ENCODE measurements at regions of chr10 and their contacts with region 1.

Region 1: DNA sequence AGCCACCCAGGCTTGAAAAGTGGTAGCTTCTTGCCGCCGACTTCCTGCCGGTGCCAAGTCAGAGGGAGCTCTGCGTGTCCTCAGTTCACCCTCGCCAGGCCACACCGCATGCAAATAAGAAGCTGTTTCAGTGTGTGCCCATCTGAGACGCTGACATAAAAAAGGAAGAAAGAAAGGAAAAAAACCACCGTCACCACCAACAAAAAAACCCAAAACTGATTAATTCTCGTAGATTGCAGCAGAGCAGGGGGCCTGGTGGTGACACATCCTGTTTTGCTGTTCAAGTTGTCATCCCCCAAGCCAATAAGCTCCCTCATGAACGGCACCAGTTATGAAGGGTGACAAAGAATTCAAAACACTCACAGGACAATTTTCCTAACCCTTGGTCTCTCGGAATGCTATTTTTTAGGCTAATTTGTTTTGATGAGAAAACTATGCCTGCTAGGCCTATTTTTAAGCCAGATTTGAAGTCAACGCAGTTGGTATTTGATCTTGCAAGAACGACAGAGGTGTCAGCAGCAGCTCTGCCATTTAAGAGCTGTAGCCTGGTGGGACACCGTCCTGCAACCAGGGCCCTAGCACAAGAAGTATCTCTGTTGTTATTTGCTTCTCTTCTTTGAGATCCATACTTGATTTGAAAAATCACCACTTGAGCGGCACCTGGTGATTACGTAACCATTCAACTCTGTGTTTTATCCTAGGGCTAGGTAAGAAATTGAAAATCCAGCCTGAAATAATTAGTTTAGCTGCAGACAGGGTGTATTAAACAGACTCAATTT is 145.6 kb downstream of the PFKFB3 start:
- DNase-seq: peak; percentile 94
- ATAC-seq: peak; percentile 91
- H3K4me3 Mint-ChIP-seq: peak overlapping the region; percentile 65
- H3K27ac Mint-ChIP-seq: peak overlapping the region; percentile 98
- H3K4me1 Mint-ChIP-seq: peaks cover 62% of the 10 kb centered on the region
- H3K27me3 Mint-ChIP-seq: no peaks in the 10 kb centered on the region

Region 2: GRCh38 chr10:6144406-6145165 is 203.7 kb before region 1 on chr10:
- CTCF ChIA-PET with region 1: no interaction called
- POLR2A ChIA-PET with region 1: interaction called, 3 read pairs
- intact Hi-C with region 1: loop called in 1 of 2 experiments (anchors 1 kb)
- DNase-seq: peak; percentile 94
- ATAC-seq: peak; percentile 71
- H3K4me3 Mint-ChIP-seq: peak overlapping the region; percentile 81
- H3K27ac Mint-ChIP-seq: peak overlapping the region; percentile 90
- H3K4me1 Mint-ChIP-seq: peaks cover 79% of the 10 kb centered on the region
- H3K27me3 Mint-ChIP-seq: no peaks in the 10 kb centered on the region

Region 3: DNA sequence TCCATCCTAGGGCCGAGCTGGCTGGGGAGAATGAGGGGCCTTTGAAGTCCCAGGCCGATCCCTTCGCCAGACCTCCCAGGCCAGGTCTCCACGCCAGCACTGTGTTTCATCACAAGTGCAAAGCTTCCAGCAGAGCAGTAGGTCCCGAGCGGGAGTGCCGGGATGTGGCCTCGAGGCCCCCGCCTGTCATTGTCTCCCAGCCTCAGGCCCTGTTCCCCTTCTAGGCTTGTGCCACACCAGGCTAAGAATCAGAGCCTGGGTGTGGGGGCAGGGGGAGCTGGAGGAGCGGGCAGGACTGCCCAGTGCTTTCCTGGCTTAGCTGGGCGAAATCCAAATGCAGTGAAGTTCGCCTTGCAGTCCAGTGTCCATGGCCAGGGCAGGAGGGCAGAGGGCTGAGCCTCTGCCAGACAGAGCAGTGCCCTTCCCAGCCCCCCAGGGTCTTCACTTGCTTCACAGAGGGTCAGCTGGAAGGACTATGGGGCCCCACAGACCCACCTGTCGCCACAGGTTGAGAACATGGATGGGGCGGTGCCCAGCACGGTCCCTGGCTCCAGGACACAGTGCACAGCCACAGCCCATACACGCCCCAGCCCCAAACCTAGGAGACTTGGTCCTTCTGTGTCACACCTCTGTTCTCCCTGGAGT is 165.7 kb before region 1 on chr10:
- CTCF ChIA-PET with region 1: no interaction called
- POLR2A ChIA-PET with region 1: no interaction called
- intact Hi-C with region 1: no loop called
- DNase-seq: no peak
- ATAC-seq: no peak
- H3K4me3 Mint-ChIP-seq: no peak overlapping the region
- H3K27ac Mint-ChIP-seq: no peak overlapping the region
- H3K4me1 Mint-ChIP-seq: peaks cover 40% of the 10 kb centered on the region
- H3K27me3 Mint-ChIP-seq: no peaks in the 10 kb centered on the region

Region 4: DNA sequence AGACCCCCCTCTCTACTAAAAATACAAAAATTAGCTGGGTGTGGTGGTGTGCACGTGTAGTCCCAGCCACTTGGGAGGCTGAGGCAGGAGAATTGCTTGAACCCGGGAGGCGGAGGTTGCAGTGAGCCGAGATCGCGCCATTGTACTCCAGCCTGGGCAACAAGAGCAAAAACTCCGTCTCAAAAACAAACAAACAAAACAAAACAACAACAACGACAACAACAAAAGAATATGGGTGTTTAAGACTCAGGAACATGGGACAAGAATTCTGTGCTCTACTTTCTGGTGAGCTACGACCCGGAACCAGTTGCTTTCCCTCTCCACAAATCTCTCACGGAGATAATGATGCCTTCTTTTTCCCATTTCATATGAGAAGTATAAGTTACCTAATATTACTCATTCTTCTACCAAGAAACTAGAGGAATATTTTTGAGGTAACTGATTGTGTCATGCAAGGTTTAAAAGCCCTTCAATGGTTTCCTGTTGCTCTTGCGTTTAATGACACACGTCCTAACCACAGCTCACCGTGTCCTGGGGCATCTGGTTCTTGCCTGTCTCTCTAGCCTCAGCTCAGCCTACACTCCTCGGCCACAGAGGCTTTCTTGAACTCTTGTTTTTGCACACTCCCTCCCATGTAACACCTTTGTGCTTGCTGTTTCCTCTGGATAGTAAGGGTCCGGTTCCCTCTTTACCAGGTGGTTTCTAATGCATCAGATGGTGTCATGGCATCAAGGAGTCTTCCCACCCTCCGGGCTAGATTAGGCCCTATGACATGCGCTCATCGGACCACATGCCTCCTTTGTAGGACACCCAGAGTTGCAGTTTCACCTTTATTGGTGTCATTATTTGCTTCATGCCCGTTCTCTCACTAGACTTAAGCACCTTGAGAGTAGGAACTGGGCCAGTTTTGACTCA is 78.1 kb before region 1 on chr10:
- CTCF ChIA-PET with region 1: interaction called, 9 read pairs
- POLR2A ChIA-PET with region 1: interaction called, 28 read pairs
- intact Hi-C with region 1: loop called (anchors 1 kb)
- DNase-seq: peak; percentile 90
- ATAC-seq: peak; percentile 72
- H3K4me3 Mint-ChIP-seq: peak overlapping the region; percentile 25
- H3K27ac Mint-ChIP-seq: peak overlapping the region; percentile 92
- H3K4me1 Mint-ChIP-seq: peaks cover 73% of the 10 kb centered on the region
- H3K27me3 Mint-ChIP-seq: no peaks in the 10 kb centered on the region

Region 5: DNA sequence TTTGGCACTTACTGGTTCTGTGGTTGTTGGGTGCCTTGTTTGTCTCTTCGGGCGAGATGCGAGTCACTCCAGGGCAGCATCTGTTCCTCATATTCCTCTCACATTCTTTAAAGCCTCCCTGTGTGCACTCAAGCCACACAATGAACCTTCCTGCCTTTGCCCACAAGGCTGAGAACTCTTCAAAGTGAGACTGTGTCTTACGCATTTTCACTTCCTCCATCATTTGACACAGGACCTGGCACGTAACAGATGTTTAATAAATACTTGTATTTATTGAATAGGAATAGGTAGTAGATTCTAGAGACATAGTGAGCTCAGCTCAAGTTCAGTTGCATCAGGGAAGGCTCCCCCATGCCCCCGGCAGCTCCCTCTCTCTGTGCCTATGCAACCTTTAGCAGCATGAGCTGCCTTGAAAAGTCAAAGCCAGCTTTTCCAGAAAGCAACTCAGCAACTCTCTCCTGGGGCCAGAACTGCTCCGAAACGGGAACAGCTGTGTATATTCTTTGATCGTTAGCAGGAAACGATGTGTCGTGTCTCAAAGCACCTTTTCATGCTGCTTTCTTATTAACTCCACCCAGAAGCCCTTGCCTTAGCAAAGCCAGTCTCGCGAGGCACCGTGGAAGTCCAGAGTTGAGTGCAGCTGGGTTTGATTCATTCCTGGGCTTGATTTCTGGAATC is 48.0 kb before region 1 on chr10:
- CTCF ChIA-PET with region 1: interaction called, 6 read pairs
- POLR2A ChIA-PET with region 1: interaction called, 20 read pairs
- intact Hi-C with region 1: loop called (anchors 2 kb)
- DNase-seq: peak; percentile 65
- ATAC-seq: peak; percentile 68
- H3K4me3 Mint-ChIP-seq: peak overlapping the region; percentile 30
- H3K27ac Mint-ChIP-seq: peak overlapping the region; percentile 80
- H3K4me1 Mint-ChIP-seq: peaks cover 59% of the 10 kb centered on the region
- H3K27me3 Mint-ChIP-seq: no peaks in the 10 kb centered on the region

Region 6: DNA sequence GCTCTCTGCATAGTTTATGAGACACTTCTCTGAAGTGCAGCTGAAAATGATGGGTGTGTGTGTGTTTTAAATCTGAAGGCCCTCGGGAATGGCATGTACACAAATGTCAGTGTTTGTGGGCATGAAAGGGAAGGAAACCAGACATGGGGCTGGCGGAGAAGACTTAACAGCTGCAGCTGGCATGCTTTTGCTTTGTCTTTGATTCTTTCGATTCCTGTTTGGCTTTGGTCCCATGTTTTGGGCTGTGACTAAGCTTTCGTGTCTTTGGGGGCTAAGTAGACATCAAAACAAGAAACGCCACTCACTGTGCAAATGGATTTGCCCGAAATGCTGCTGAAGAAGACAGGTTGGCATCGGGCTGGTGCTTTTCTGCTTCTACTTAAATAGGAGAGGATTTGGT is 33.8 kb after region 1 on chr10:
- CTCF ChIA-PET with region 1: interaction called, 7 read pairs
- POLR2A ChIA-PET with region 1: no interaction called
- intact Hi-C with region 1: loop called (anchors 1 kb)
- DNase-seq: peak; percentile 66
- ATAC-seq: peak; percentile 82
- H3K4me3 Mint-ChIP-seq: peak overlapping the region; percentile 60
- H3K27ac Mint-ChIP-seq: peak overlapping the region; percentile 86
- H3K4me1 Mint-ChIP-seq: peaks cover 24% of the 10 kb centered on the region
- H3K27me3 Mint-ChIP-seq: no peaks in the 10 kb centered on the region